Dorsolateral prefrontal cortex (tissue), 120 donors: ENCODE measurements at regions of chr13 and their contacts with region 1.

Region 1: DNA sequence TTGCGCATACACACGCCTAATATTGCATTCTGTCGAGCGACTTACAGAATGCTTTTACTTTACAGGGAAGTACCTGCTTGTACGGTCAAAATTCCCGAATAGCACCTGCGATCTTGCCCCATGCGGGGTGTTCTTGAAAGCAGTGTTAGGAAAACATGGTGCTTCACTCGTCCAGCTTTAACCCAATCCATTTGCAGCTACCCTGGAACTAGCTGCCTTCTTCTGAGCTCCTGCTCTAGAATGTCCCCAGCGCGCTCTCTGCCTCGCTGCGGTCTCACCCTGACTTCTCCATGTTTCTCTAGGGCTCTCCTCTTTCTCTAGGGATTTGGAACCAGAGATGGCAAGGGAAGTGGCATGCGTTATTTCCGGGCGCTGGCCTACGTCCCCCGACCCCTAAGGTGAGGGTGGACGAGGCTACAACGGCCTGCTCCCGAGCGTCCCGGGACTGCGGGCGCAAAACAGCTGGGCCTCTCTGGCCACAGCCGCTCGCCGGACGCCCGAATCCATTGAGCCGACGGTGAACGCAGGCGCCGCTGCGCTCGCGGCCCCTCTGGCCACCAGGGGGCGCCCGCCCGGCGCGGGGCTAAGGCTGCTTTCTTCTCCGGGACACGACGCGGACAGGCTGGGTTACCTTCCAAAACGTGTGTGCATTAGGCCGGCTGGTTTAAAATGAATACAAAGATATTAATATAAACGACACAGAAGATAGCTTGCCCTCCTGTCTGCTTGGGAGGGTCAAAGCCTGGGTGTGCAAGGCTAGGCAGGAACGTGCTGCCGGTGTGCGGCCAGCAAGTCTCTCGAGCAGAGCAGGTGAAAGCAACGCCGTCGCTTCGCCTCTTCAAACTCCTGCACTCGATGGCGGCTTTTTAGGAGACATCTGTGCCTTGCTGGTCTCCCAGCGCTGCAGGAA is 1.8 kb upstream of the SPRY2 start:
- DNase-seq: peak; percentile 72 to 91 (median 80)
- H3K4me3 ChIP-seq: peak overlapping the region; percentile 53 to 99 (median 91)
- H3K27ac ChIP-seq: peak overlapping the region in 58 of 59 donors; percentile 85 to 100 (median 97)
- H3K27me3 ChIP-seq: no peaks in the 10 kb centered on the region
- CTCF ChIP-seq: peak; percentile 89 to 100 (median 97)

Region 2: GRCh38 chr13:79560953-79561352 is 781.8 kb before region 1 on chr13:
- intact Hi-C with region 1: loop called in 1 of 2 experiments (anchors 10 kb)
- DNase-seq: no peak
- H3K4me3 ChIP-seq: no peak overlapping the region
- H3K27ac ChIP-seq: no peak overlapping the region
- H3K27me3 ChIP-seq: no peaks in the 10 kb centered on the region
- CTCF ChIP-seq: no peak

Region 3: GRCh38 chr13:79901336-79901735 is 441.4 kb before region 1 on chr13:
- intact Hi-C with region 1: loop called (anchors 5 to 10 kb)
- DNase-seq: peak in 6 of 10 donors; percentile 10 to 54 (median 40)
- H3K4me3 ChIP-seq: peak overlapping the region in 8 of 59 donors; percentile 8 to 32 (median 19)
- H3K27ac ChIP-seq: peak overlapping the region in 6 of 59 donors; percentile 15 to 42 (median 26)
- H3K27me3 ChIP-seq: no peaks in the 10 kb centered on the region
- CTCF ChIP-seq: peak in 51 of 56 donors; percentile 24 to 70 (median 42)

Region 4: GRCh38 chr13:80012251-80012650 is 330.5 kb before region 1 on chr13:
- intact Hi-C with region 1: loop called (anchors 5 to 10 kb)
- DNase-seq: no peak
- H3K4me3 ChIP-seq: peak overlapping the region in 10 of 59 donors; percentile 29 to 56 (median 46)
- H3K27ac ChIP-seq: peak overlapping the region in 43 of 59 donors; percentile 15 to 92 (median 85)
- H3K27me3 ChIP-seq: no peaks in the 10 kb centered on the region
- CTCF ChIP-seq: no peak

Region 5: GRCh38 chr13:80196756-80197155 is 146.0 kb before region 1 on chr13:
- intact Hi-C with region 1: no loop called
- DNase-seq: no peak
- H3K4me3 ChIP-seq: no peak overlapping the region
- H3K27ac ChIP-seq: no peak overlapping the region
- H3K27me3 ChIP-seq: no peaks in the 10 kb centered on the region
- CTCF ChIP-seq: no peak

Region 6: DNA sequence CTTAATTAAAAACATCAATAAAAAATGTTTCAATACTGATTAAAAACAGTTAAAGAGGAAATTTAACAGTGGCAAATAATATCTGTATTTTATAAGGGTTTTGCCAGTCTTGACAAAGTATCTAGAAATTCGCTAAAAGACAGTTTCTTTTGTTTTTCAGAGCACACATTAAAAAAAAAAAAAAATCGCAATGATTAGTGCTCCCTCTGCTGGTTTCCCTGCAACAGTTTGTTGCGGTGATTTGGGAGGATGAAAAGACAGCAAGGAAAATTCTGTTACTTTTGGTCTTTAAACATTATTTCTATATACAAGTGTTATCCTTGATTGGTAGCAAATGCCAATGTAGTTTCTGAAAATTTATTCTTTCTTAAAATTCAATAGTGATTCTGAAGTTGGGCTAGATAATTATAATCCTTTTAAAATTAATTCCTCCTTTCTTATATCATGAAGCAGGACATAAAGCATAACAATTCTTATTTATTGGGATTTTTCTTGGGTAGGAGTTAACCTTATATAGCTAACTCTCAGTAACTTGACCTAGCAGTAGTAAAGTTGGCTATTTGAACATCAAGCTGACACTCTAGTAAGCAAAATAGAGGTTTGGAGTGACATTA is 21.3 kb after region 1 on chr13:
- intact Hi-C with region 1: loop called in 1 of 2 experiments (anchors 2 kb)
- DNase-seq: no peak
- H3K4me3 ChIP-seq: peak overlapping the region in 42 of 59 donors; percentile 5 to 54 (median 36)
- H3K27ac ChIP-seq: no peak overlapping the region
- H3K27me3 ChIP-seq: no peaks in the 10 kb centered on the region
- CTCF ChIP-seq: peak; percentile 77 to 98 (median 89)

Region 7: GRCh38 chr13:81017513-81018152 is 674.9 kb after region 1 on chr13:
- intact Hi-C with region 1: loop called in 1 of 2 experiments (anchors 5 kb)
- DNase-seq: no peak
- H3K4me3 ChIP-seq: peak overlapping the region in 54 of 59 donors; percentile 3 to 63 (median 44)
- H3K27ac ChIP-seq: peak overlapping the region in 1 of 59 donors; percentile 58
- H3K27me3 ChIP-seq: no peaks in the 10 kb centered on the region
- CTCF ChIP-seq: peak; percentile 4 to 87 (median 74)